CD14-positive monocyte (primary cell): ENCODE measurements at regions of chr6 and their contacts with region 1.

Region 1: DNA sequence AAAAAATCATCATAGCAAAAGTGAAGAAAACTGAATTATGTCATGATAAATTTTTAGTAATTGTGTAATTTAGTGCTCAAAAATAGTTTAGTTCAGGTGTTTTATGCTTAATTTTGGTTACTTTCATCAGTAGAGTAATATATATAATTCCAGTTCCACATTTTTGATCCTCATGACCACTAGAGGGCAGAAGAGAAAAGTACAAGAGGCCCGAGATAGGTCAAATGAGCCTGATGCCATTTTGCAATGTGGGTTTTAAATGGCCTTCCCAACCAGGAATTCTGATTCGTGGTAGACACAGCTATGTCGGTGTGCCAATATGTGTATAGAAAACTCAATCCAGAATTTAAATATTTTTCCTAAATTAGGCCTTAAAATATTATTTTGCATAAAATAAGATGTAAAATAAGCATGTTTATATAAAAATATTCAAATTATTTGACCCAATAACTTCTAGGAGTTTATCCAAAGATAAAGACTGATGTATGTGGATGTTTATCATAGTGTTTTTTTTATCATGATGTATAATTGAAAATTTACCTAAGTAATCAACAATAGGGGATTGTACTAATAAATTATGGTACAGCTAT is 159.7 kb upstream of the RPS6KA2 start:
- DNase-seq: peak; percentile 44 to 67 (median 64)
- H3K4me3 ChIP-seq: no peak overlapping the region
- H3K4me3 Mint-ChIP-seq: no peak overlapping the region
- H3K27ac ChIP-seq: no peak overlapping the region
- H3K27ac Mint-ChIP-seq: no peak overlapping the region
- H3K4me1 ChIP-seq: no peaks in the 10 kb centered on the region
- H3K4me1 Mint-ChIP-seq: no peaks in the 10 kb centered on the region
- H3K27me3 ChIP-seq: no peaks in the 10 kb centered on the region
- H3K27me3 Mint-ChIP-seq: peaks cover 3 to 7% (median 4%) of the 10 kb centered on the region in 3 donors
- CTCF ChIP-seq: peak; percentile 87

Region 2: DNA sequence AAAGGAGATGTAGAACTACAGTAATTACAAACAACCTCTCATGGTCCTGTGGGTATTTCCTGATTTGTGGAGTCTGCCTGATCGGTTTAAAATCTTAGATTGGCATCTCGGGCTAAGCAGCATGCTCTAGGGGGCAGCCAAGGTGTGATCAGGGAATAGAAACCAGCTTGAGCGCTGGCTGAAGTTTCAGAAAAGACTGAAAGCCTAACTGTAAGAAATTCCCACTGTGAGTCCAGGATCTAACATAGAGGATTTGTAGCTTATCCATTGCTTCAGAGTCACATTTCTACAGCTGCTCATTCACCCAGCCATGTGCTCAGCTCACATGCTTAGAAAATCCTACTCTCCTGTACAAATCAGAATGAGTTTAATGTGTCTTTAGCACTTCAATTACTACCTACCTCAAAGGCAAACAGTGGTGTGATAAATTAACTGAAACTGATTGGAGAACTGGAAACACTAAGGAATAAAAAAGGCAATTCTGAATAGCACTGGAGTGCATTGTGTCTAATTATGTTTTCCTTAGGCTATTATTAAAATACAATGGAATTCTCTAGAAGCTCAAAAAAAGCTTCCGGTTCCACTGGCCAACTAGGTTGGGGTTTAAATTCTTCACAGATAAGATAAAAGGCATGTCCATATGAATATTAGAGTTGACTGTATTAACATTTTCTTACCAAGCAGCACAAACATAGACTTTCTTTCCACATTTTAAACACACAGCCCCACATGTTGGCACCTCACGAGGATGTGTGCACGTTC is 330.2 kb before region 1 on chr6:
- intact Hi-C with region 1: no loop called
- DNase-seq: no peak
- H3K4me3 ChIP-seq: no peak overlapping the region
- H3K4me3 Mint-ChIP-seq: no peak overlapping the region
- H3K27ac ChIP-seq: no peak overlapping the region
- H3K27ac Mint-ChIP-seq: no peak overlapping the region
- H3K4me1 ChIP-seq: no peaks in the 10 kb centered on the region
- H3K4me1 Mint-ChIP-seq: peaks cover 5% of the 10 kb centered on the region
- H3K27me3 ChIP-seq: no peaks in the 10 kb centered on the region
- H3K27me3 Mint-ChIP-seq: peaks cover 1 to 2% (median 2%) of the 10 kb centered on the region in 3 donors
- CTCF ChIP-seq: no peak

Region 3: DNA sequence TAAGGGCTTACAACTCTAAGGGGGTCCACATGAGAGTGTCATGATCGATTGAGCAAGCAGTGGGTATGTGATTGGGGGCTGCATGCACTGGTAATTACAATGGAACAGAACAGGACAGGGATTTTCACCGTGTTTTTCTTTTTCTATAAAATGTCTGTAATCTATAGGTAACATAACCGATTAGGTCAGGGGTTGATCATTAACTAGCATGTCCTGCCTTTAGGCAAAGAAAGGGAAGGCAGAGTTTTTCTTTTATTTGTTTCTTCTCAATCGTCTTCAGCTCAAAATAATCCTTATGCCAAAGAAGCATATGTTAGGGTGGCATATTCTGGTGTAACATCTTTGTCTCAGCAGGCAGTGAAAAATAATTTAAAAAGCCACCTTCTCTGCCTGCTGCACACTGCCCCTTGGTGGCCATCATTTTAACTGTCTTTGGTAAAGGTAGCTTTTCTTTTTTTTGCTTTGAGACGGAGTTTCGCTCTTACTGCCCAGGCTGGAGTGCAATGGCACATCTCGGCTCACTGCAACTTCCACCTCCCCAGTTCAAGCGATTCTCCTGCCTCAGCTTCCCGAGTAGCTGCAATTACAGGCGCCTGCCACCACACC is 202.7 kb after region 1 on chr6:
- intact Hi-C with region 1: loop called (anchors 5 kb)
- DNase-seq: peak; percentile 44 to 51 (median 47)
- H3K4me3 ChIP-seq: no peak overlapping the region
- H3K4me3 Mint-ChIP-seq: peak overlapping the region in 1 of 2 donors; percentile 11
- H3K27ac ChIP-seq: no peak overlapping the region
- H3K27ac Mint-ChIP-seq: peak overlapping the region in 3 of 7 donors; percentile 18 to 44 (median 25)
- H3K4me1 ChIP-seq: no peaks in the 10 kb centered on the region
- H3K4me1 Mint-ChIP-seq: peaks cover 8% of the 10 kb centered on the region
- H3K27me3 ChIP-seq: no peaks in the 10 kb centered on the region
- H3K27me3 Mint-ChIP-seq: peaks cover 0 to 1% (median 0%) of the 10 kb centered on the region in 3 donors
- CTCF ChIP-seq: peak; percentile 48